ENCODE measurements at regions of chr6 and their contacts with region 1.

Region 1: DNA sequence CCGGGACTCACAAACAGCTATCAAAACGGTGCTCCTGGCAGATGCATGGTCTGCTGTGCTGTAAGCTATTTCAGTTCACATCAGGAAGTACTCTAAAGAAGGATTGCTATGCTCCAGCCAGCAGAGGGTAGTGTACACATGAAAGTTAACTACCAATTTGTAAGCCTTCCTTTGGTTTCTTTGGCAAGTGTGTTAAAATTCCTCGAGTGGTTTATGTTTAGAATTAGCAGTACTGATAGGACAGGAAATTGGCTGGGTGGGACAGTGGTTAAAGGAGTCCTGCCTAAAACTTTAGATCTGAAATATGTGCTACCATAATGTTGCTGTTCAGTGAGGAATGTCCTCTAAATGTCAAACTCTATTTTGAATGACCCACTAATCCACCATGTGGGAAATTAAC is 47.4 kb downstream of the TRMT11 start:
- DNase-seq: peak; percentile 21 to 62 (median 29)
- H3K4me3 ChIP-seq: no peak overlapping the region
- H3K27ac ChIP-seq: no peak overlapping the region
- H3K4me1 ChIP-seq: no peaks in the 10 kb centered on the region
- H3K27me3 ChIP-seq: no peaks in the 10 kb centered on the region
- CTCF ChIP-seq: peak; percentile 45 to 68 (median 56)
- POLR2A ChIP-seq: no peak

Region 2: GRCh38 chr6:125821825-125822281 is 211.8 kb before region 1 on chr6:
- intact Hi-C with region 1: no loop called
- DNase-seq: peak in 4 of 7 donors; percentile 28 to 73 (median 48)
- H3K4me3 ChIP-seq: no peak overlapping the region
- H3K27ac ChIP-seq: peak overlapping the region in 2 of 5 donors; percentile 19 to 74
- H3K4me1 ChIP-seq: peaks cover 33 to 70% of the 10 kb centered on the region in 2 donors
- H3K27me3 ChIP-seq: no peaks in the 10 kb centered on the region
- CTCF ChIP-seq: no peak
- POLR2A ChIP-seq: no peak

Region 3: GRCh38 chr6:126167726-126168125 is 134.0 kb after region 1 on chr6:
- intact Hi-C with region 1: loop called in 1 of 2 experiments (anchors 10 kb)
- DNase-seq: no peak
- H3K4me3 ChIP-seq: no peak overlapping the region
- H3K27ac ChIP-seq: no peak overlapping the region
- H3K4me1 ChIP-seq: no peaks in the 10 kb centered on the region
- H3K27me3 ChIP-seq: no peaks in the 10 kb centered on the region
- CTCF ChIP-seq: no peak
- POLR2A ChIP-seq: no peak

Region 4: DNA sequence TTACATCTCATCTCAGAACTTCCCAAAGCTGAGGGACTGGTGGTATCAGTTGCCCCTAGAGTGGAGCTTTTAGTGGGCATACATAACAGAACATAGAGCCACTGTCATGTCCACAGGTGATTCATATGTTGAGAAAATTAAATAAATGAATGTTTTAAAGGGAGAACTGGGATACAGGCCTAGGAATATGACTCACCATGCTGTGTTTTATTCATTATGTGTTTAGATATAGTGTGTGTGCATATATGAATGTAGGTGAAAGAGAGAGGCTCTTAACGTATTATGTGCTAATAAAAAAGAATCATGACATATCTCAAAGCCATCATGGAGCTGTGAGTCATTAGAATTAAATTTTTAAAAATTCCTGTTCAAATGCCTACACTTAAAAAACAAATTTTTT is 752.6 kb after region 1 on chr6:
- intact Hi-C with region 1: no loop called
- DNase-seq: no peak
- H3K4me3 ChIP-seq: no peak overlapping the region
- H3K27ac ChIP-seq: no peak overlapping the region
- H3K4me1 ChIP-seq: no peaks in the 10 kb centered on the region
- H3K27me3 ChIP-seq: no peaks in the 10 kb centered on the region
- CTCF ChIP-seq: no peak
- POLR2A ChIP-seq: no peak

Measured in adrenal gland (tissue), 19 donors.